Activated T-helper 2 cell treated with anti-CD3 and anti-CD28 coated beads, Interferon-gamma antibody, Interleukin-2, Interleukin-4, amounts not matched to agents 10 μg/mL and 5 μg/mL and 100 μg/mL, durations not matched to agents 14 hours and 24 hours and 36 hours (primary cell): ENCODE measurements at regions of chr10 and their contacts with region 1.

Region 1: GRCh38 chr10:96747734-96748550 is 27.6 kb upstream of the PIK3AP1 start:
- DNase-seq: peak; percentile 20
- H3K4me3 Mint-ChIP-seq: peak overlapping the region; percentile 26
- H3K27ac Mint-ChIP-seq: peak overlapping the region; percentile 51
- H3K4me1 Mint-ChIP-seq: peaks cover 18% of the 10 kb centered on the region
- H3K27me3 Mint-ChIP-seq: peaks cover 19% of the 10 kb centered on the region

Region 2: DNA sequence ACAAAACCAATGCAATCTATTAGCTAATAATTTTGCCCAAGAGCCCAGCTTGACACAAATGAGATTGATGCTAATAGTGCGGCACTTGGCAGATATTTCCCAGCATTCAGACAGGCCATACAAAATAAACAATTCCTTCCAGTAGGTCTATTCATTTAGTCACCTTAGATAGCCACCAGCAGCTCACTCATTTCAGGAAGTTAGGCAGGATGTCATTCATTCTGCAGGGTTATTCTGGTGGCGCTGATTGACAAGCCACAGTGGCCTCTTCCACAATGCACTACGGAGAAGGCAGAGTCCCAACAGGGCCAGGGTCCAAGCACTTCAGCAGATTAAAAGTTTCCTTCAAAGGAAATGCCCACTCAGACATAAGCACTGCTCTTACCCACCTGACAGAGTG is 83.4 kb before region 1 on chr10:
- intact Hi-C with region 1: no loop called
- DNase-seq: no peak
- H3K4me3 Mint-ChIP-seq: no peak overlapping the region
- H3K27ac Mint-ChIP-seq: no peak overlapping the region
- H3K4me1 Mint-ChIP-seq: peaks cover 12% of the 10 kb centered on the region
- H3K27me3 Mint-ChIP-seq: peaks cover 4% of the 10 kb centered on the region

Region 3: GRCh38 chr10:96772194-96772593 is 24.3 kb after region 1 on chr10:
- intact Hi-C with region 1: no loop called
- DNase-seq: no peak
- H3K4me3 Mint-ChIP-seq: no peak overlapping the region
- H3K27ac Mint-ChIP-seq: no peak overlapping the region
- H3K4me1 Mint-ChIP-seq: no peaks in the 10 kb centered on the region
- H3K27me3 Mint-ChIP-seq: peaks cover 2% of the 10 kb centered on the region

Region 4: DNA sequence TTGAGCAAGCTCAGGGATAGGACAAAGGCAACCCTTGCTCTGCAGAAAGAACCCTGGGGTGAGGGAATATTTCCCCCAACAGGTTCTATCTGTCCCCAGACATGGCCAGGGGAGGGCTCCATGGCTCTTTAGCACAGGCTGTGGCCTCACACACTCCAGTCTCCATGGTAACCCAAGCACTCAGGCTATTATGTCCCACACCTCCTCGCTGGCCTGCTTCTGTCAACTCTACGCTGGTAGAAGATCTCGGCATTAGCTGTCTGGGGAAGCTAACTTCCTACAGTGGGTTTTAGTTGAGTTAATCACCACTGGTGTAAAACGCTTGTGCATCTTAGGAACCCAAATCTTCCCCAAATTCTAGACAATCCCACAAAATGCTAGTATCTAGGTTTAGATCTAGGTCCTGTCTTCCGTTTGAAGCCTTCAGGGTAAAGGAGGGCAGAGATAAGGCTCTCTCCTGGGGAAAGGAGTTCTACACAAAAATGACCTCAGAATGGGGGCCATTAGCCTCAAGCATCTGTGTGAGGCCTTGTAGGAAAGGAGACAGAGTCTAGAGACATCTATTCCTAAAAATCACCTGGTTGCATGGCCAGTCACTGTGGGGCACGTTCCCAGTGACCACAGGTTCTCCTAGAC is 474.5 kb after region 1 on chr10:
- intact Hi-C with region 1: loop called (anchors 1 kb)
- DNase-seq: no peak
- H3K4me3 Mint-ChIP-seq: no peak overlapping the region
- H3K27ac Mint-ChIP-seq: no peak overlapping the region
- H3K4me1 Mint-ChIP-seq: peaks cover 33% of the 10 kb centered on the region
- H3K27me3 Mint-ChIP-seq: no peaks in the 10 kb centered on the region